CD4-positive, alpha-beta memory T cell (primary cell): ENCODE measurements at regions of chr9 and their contacts with region 1.

Region 1: GRCh38 chr9:129177791-129178559 is at the start of gene IER5L:
- DNase-seq: peak; percentile 91 to 93 (median 92)
- H3K4me3 ChIP-seq: peak within 1 kb of the TSS; percentile 47 to 59
- H3K4me3 Mint-ChIP-seq: peak within 1 kb of the TSS; percentile 89 to 93 (median 90)
- H3K27ac ChIP-seq: peak within 1 kb of the TSS; percentile 14
- H3K27ac Mint-ChIP-seq: peak within 1 kb of the TSS in 4 of 7 donors; percentile 81 to 93 (median 88)
- H3K4me1 ChIP-seq: peaks cover 28% of the 10 kb centered on the region
- H3K4me1 Mint-ChIP-seq: peaks cover 6 to 16% (median 9%) of the 10 kb centered on the region in 4 donors
- H3K27me3 ChIP-seq: peaks cover under 1% of the 10 kb centered on the region
- H3K27me3 Mint-ChIP-seq: peaks cover 0 to 2% of the 10 kb centered on the region in 2 donors
- total RNA-seq, gene IER5L: 3.1 to 3.6 TPM

Region 2: GRCh38 chr9:129166623-129167557 is 11.1 kb before region 1 on chr9:
- CTCF ChIA-PET with region 1: interaction called, 19 read pairs
- POLR2A ChIA-PET with region 1: interaction called, 10 read pairs
- intact Hi-C with region 1: no loop called
- DNase-seq: peak in 1 of 5 donors; percentile 4
- H3K4me3 ChIP-seq: no peak overlapping the region
- H3K4me3 Mint-ChIP-seq: peak overlapping the region in 6 of 8 donors; percentile 43 to 74 (median 67)
- H3K27ac ChIP-seq: no peak overlapping the region
- H3K27ac Mint-ChIP-seq: peak overlapping the region in 3 of 7 donors; percentile 13 to 52 (median 52)
- H3K4me1 ChIP-seq: peaks cover 11% of the 10 kb centered on the region
- H3K4me1 Mint-ChIP-seq: peaks cover 10 to 26% (median 12%) of the 10 kb centered on the region in 4 donors
- H3K27me3 ChIP-seq: no peaks in the 10 kb centered on the region
- H3K27me3 Mint-ChIP-seq: no peaks in the 10 kb centered on the region

Region 3: DNA sequence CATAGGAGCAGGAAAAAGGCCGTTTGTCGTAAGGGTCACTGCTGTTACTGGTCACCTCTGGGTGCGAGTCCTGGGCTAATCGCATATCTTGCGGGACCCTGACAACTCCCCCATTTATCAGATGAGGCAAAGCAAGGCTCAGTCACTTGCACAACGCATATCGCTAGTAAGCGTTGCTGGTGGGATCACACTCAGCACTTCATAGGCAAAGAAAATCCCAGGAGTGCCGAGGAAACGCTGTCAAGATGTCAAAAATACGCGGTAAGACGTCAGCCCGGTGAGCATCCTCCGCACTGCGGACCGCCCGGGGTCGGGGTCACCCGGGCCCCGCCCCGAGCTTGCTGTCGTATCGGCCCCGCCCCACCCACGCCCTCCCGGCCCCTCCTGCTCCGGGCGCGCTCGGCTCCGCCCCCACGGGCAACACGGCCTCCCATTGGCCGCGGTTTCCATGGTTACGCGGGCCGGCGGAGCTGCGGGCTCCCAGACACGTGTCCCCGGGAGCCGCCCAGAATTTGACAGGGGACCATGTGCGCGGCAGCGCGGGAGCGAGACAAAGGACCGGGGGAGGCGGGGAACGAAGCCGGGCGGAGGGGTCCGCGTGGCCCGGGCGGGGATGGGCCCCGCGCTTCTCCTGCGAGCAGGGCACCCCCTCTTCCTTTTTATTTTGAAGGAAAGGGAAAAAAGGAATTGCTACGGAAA is 80.3 kb after region 1 on chr9:
- CTCF ChIA-PET with region 1: interaction called, 7 read pairs
- POLR2A ChIA-PET with region 1: interaction called, 12 read pairs
- intact Hi-C with region 1: loop called (anchors 2 kb)
- DNase-seq: peak; percentile 87 to 90 (median 88)
- H3K4me3 ChIP-seq: peak overlapping the region; percentile 42 to 47
- H3K4me3 Mint-ChIP-seq: peak overlapping the region; percentile 54 to 81 (median 74)
- H3K27ac ChIP-seq: no peak overlapping the region
- H3K27ac Mint-ChIP-seq: peak overlapping the region; percentile 52 to 88 (median 71)
- H3K4me1 ChIP-seq: peaks cover 30% of the 10 kb centered on the region
- H3K4me1 Mint-ChIP-seq: peaks cover 15 to 39% (median 29%) of the 10 kb centered on the region in 4 donors
- H3K27me3 ChIP-seq: no peaks in the 10 kb centered on the region
- H3K27me3 Mint-ChIP-seq: peaks cover 1 to 10% of the 10 kb centered on the region in 2 donors

Region 4: GRCh38 chr9:129413537-129414376 is 235.8 kb after region 1 on chr9:
- CTCF ChIA-PET with region 1: no interaction called
- POLR2A ChIA-PET with region 1: interaction called, 11 read pairs
- intact Hi-C with region 1: loop called (anchors 2 kb)
- DNase-seq: peak; percentile 96 to 99 (median 98)
- H3K4me3 ChIP-seq: peak overlapping the region; percentile 29 to 53
- H3K4me3 Mint-ChIP-seq: peak overlapping the region; percentile 82 to 91 (median 86)
- H3K27ac ChIP-seq: peak overlapping the region; percentile 97
- H3K27ac Mint-ChIP-seq: peak overlapping the region; percentile 96 to 99 (median 98)
- H3K4me1 ChIP-seq: peaks cover 27% of the 10 kb centered on the region
- H3K4me1 Mint-ChIP-seq: peaks cover 16 to 34% (median 24%) of the 10 kb centered on the region in 4 donors
- H3K27me3 ChIP-seq: no peaks in the 10 kb centered on the region
- H3K27me3 Mint-ChIP-seq: no peaks in the 10 kb centered on the region

Region 5: DNA sequence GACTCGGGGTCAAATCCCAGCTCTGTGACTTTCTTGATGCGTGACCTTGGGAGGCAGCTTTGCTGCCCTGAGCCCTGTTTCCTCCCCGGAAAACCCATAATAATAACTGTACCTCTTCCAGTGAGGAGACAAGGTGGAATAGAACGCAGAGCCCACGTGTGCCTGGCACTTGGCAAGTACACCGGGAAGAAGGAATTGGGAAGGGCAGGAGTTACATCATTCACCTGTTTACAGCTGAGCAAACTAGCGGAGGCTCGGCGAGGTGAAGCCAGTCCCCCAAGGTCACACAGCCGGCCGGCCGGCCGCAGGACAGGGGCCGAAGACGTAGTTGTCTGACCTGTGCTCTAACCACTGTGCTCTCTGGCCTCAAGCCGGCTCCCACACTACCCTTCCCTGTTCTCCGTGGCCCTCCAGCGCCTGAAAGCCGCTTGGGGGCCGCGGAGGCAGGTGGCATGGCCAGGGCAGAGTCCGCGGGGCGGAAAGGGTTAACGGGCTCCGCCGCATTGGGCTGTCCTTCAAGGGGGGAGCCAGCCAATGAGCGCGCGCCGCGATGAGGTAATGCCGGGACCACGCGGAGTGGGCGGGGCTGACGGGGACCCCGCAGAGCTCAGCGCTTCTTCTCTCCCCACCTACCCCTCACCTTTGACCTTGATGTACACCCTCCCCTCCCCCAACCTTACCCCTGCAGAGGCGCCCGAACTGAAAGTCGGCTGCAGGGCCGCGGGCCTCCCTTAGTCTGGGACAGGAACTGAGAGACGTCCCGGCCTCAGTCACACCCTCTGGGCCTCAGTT is 317.8 kb after region 1 on chr9:
- CTCF ChIA-PET with region 1: interaction called, 9 read pairs
- POLR2A ChIA-PET with region 1: interaction called, 18 read pairs
- intact Hi-C with region 1: loop called (anchors 2 kb)
- DNase-seq: peak; percentile 77 to 84 (median 78)
- H3K4me3 ChIP-seq: peak overlapping the region; percentile 51 to 84
- H3K4me3 Mint-ChIP-seq: peak overlapping the region; percentile 81 to 92 (median 86)
- H3K27ac ChIP-seq: peak overlapping the region; percentile 63
- H3K27ac Mint-ChIP-seq: peak overlapping the region; percentile 75 to 94 (median 91)
- H3K4me1 ChIP-seq: peaks cover 35% of the 10 kb centered on the region
- H3K4me1 Mint-ChIP-seq: peaks cover 18 to 49% (median 32%) of the 10 kb centered on the region in 4 donors
- H3K27me3 ChIP-seq: no peaks in the 10 kb centered on the region
- H3K27me3 Mint-ChIP-seq: no peaks in the 10 kb centered on the region